GM13976 (cell line): ENCODE measurements at regions of chr5 and their contacts with region 1.

Region 1: DNA sequence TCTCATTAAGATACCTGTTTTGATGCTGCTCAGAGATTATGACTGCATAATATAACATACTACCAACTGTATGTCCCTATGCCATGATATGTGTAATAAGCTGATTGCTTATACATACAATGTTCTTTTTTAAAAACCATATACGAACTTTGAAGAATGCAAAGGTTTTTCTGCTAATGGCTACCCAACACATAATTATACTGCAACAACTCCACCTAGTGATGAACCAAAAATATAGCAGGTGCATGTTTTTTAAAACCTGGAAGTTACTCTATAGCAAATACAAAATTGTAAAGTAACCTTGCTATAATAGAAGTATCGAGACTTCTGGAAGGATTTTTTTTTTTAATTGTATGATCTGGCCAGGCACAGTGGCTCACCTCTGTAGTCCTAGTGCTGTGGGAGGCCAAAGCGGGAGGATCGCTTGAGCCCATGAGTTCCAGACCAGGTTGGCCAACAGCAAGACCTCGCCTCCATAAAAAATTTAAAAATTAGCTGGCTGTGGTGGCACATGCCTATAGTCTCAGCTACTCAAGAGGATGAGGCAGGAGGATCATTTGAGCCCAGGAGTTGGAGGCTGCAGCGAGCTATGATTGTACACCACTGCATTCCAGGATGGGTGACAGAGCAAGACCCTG is 49.1 kb downstream of the HOMER1 start:
- DNase-seq: peak; percentile 55
- CTCF ChIP-seq: peak; percentile 49

Region 2: GRCh38 chr5:79143684-79144379 is 321.0 kb before region 1 on chr5:
- in situ Hi-C with region 1: loop called (anchors 5 kb)
- DNase-seq: no peak
- CTCF ChIP-seq: no peak